Calu3 (cell line): ENCODE measurements at regions of chr6 and their contacts with region 1.

Region 1: DNA sequence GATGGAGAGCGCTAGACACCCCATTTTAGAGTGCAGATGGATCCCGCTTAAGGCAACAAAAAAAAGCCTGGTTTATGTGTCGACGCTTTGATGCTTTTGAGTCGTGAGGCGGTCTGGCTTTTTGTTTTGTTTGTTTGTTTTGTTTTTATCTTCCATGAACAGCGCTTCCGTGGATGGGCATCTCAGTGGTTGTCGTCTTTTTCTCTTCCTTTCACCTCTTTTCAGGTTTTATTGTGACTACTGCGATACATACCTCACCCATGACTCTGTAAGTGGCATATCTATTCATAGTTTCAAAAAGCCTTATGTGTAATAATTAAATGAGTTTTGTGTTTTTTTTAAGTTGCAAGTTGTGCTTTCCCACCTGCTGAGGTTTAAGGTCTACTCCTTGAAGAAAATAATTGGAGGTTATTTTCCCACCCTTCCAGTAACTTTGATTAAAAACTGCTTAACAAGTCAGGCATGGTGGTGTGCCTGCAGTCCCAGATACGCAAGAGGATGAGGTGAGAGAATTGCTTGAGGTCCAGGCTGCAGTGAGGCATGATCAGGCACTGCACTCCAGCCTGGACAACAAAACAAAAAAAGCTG is 476 bp downstream of the SNRPC start:
- DNase-seq: no peak
- H3K4me3 Mint-ChIP-seq: no peak overlapping the region
- H3K27ac Mint-ChIP-seq: no peak overlapping the region
- H3K4me1 Mint-ChIP-seq: no peaks in the 10 kb centered on the region
- H3K27me3 Mint-ChIP-seq: no peaks in the 10 kb centered on the region
- CTCF ChIP-seq: no peak

Region 2: DNA sequence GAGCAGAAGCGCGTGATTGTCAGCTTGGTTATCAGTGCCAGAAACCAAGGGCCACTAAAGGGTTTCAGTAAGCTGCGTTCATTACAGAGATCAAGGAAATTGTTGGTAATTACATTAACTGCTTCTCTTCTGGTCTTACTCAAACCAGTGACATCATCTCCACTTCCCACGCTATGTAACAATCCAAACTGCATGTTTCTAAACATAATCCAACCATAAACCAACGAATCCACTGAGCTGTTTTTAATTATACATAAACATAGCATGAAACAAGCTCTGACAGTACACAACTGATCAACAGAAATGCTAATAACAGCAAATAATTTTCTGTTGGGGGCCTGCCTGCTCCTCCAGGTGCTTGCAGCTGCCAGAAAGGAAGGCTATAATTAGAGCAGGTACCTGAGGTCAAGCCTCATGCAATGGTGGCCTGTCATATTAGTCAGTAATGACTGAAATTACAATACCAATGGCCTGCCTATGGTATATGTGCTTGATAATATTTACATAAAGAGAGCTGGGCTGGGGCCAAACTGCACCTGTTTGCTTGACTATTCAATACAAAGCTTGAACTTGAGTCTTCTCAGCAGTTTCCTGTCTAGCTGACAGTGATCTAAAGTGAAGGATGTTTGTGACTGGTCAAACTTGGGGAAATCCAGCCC is 101.3 kb before region 1 on chr6:
- CTCF ChIA-PET with region 1: interaction called, 16 read pairs
- intact Hi-C with region 1: no loop called
- DNase-seq: peak; percentile 39
- H3K4me3 Mint-ChIP-seq: peak overlapping the region; percentile 69
- H3K27ac Mint-ChIP-seq: peak overlapping the region; percentile 90
- H3K4me1 Mint-ChIP-seq: peaks cover 42% of the 10 kb centered on the region
- H3K27me3 Mint-ChIP-seq: no peaks in the 10 kb centered on the region
- CTCF ChIP-seq: no peak

Region 3: GRCh38 chr6:34696739-34697543 is 60.8 kb before region 1 on chr6 and contains the start of gene ILRUN:
- CTCF ChIA-PET with region 1: interaction called, 12 read pairs
- intact Hi-C with region 1: no loop called
- DNase-seq: peak; percentile 100
- H3K4me3 Mint-ChIP-seq: peak within 1 kb of the TSS; percentile 92
- H3K27ac Mint-ChIP-seq: peak within 1 kb of the TSS; percentile 71
- H3K4me1 Mint-ChIP-seq: peaks cover 29% of the 10 kb centered on the region
- H3K27me3 Mint-ChIP-seq: no peaks in the 10 kb centered on the region
- CTCF ChIP-seq: no peak
- total RNA-seq, gene ILRUN: 137 and 145 TPM in 2 replicates

Region 4: GRCh38 chr6:34717466-34717865 is 40.3 kb before region 1 on chr6:
- CTCF ChIA-PET with region 1: interaction called, 3 read pairs
- intact Hi-C with region 1: loop called (anchors 5 kb)
- DNase-seq: no peak
- H3K4me3 Mint-ChIP-seq: no peak overlapping the region
- H3K27ac Mint-ChIP-seq: no peak overlapping the region
- H3K4me1 Mint-ChIP-seq: peaks cover 51% of the 10 kb centered on the region
- H3K27me3 Mint-ChIP-seq: no peaks in the 10 kb centered on the region
- CTCF ChIP-seq: no peak

Region 5: GRCh38 chr6:34745277-34746103 is 12.3 kb before region 1 on chr6:
- CTCF ChIA-PET with region 1: interaction called, 32 read pairs
- intact Hi-C with region 1: loop called (anchors 1 kb)
- DNase-seq: peak; percentile 94
- H3K4me3 Mint-ChIP-seq: peak overlapping the region; percentile 50
- H3K27ac Mint-ChIP-seq: peak overlapping the region; percentile 89
- H3K4me1 Mint-ChIP-seq: peaks cover 41% of the 10 kb centered on the region
- H3K27me3 Mint-ChIP-seq: no peaks in the 10 kb centered on the region
- CTCF ChIP-seq: no peak

Region 6: DNA sequence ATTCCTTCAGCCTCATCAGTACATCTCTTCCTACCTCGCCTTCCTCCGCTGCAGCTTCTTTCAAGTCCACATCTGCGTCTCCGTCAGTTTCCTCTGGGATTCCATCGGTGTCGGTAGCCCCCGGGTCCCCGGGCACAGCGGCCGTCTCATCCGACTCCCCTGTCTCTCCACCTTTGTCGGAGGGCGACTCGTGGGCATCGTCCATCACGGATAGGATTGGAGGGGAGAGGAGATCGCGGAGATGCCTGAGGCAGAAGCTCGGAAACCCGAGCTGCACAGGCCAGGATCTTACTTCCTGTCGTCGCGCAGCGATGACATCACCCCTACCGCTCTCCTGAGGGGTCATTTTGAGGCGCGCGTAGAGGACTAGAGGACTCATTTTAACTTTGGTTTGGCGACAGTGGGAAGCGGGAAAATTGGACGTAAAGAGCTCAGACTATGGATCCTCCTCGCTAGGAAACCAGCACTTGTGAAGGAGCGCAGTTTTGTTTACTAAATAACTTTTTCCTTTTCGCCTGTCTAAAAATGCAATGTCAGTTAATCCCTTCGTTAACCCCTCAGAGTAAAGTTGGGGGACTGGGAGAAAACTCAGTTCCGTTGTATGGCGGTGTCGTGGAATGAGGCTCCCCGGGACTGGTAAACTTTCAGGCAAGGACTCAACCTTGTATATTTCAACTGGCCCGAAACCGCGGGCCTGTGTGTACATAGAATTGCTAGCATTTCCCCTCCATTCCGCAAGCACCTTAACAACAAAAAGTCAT is 130.2 kb after region 1 on chr6 and contains the start of gene TAF11:
- CTCF ChIA-PET with region 1: interaction called, 5 read pairs
- intact Hi-C with region 1: loop called (anchors 5 kb)
- DNase-seq: peak; percentile 97
- H3K4me3 Mint-ChIP-seq: peak within 1 kb of the TSS; percentile 99
- H3K27ac Mint-ChIP-seq: peak within 1 kb of the TSS; percentile 96
- H3K4me1 Mint-ChIP-seq: peaks cover 35% of the 10 kb centered on the region
- H3K27me3 Mint-ChIP-seq: no peaks in the 10 kb centered on the region
- CTCF ChIP-seq: no peak
- total RNA-seq, gene TAF11: 42.9 and 44.3 TPM in 2 replicates